Ovary (tissue), 10 donors: ENCODE measurements at regions of chr10 and their contacts with region 1.

Region 1: DNA sequence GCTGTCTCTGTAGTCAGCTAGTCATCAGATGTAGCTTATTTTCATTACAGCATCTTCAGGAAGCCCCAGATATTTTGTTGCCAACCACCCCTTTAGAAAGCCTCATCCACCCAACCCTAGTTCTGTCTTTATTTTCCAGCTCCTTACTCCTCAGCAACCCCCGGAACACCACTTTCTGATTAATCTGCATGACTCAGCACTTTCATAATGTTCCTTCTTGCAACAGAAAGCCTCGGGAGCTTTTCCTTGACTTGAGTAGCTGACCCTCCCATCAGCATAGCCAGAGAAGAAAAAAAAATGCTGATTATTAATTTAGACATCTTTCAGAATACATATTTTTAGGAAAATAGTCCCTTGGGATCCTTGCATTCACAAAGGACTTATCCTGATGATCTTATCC is 244.0 kb upstream of the CXCL12 start:
- DNase-seq: no peak
- H3K4me3 ChIP-seq: no peak overlapping the region
- H3K27ac ChIP-seq: no peak overlapping the region
- H3K4me1 ChIP-seq: no peaks in the 10 kb centered on the region
- H3K27me3 ChIP-seq: no peaks in the 10 kb centered on the region
- CTCF ChIP-seq: no peak
- EP300 ChIP-seq: no peak
- POLR2A ChIP-seq: no peak

Region 2: GRCh38 chr10:42970451-42971250 is 1658.3 kb before region 1 on chr10:
- intact Hi-C with region 1: loop called in 1 of 4 experiments (anchors 5 kb)
- DNase-seq: peak in 3 of 5 donors; percentile 4 to 20 (median 5)
- H3K4me3 ChIP-seq: no peak overlapping the region
- H3K27ac ChIP-seq: no peak overlapping the region
- H3K4me1 ChIP-seq: no peaks in the 10 kb centered on the region
- H3K27me3 ChIP-seq: no peaks in the 10 kb centered on the region
- CTCF ChIP-seq: no peak
- EP300 ChIP-seq: no peak
- POLR2A ChIP-seq: no peak